ENCODE measurements at regions of chr11 and their contacts with region 1.

Region 1: DNA sequence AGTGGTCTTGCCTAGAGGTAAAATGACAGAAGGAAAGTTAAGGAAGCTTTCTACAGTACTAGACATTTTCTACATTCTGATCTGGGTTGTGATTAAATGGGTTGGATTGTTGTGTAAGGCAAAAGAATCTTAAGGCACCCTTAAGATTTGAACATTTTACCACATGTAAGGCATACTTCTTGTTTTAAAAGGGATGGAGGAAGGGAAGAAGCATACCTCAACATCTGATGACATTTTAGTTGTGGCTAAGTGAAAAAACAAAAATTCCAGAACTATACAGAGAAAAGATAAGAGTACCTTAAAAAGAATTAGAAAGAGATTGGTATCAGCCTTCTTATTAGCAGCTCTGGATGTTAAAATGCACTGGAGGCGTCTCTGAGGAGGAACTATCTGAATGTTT is 356.0 kb upstream of the CADM1 start:
- DNase-seq: no peak
- H3K4me3 ChIP-seq: no peak overlapping the region
- H3K27ac ChIP-seq: no peak overlapping the region
- H3K4me1 ChIP-seq: no peaks in the 10 kb centered on the region
- H3K27me3 ChIP-seq: no peaks in the 10 kb centered on the region
- CTCF ChIP-seq: no peak

Region 2: DNA sequence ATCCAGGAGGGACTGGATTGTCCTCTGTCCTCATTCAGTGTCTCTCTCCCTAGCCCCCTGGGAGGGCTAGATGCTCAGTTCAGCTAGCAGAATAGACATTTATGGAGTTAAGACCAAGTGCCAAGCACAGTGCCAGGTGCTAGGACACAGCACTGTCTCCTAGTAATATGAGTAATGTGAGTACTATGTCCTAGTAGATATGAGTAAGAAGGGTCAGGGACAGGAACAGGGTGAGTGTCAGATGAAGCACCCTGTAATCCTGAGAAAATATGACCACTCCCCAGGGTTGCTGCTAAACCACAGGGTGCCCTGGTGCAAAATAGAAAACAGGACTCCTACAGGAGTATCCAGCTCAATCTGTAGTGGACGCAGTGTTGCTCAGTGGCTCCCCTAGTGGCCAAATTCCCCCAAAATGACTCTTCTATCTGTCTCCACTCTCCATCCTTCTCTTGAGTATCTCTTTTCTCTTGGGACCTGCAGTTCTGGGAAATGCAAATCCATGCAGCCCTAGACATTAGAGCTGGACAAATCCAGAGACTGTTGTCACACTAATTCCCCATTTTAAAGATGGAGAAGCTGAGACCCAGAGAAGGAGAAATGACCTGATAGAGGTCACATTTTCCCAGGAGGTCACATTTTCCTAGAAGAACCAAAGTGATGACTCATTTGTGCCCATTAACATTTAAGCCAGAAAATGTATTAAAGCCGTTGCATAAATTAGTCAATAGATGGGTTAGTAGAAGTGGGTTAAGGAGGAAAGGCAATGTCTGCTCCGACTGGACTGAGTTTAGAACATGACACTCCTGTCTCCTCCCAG is 967.7 kb before region 1 on chr11:
- CTCF ChIA-PET with region 1: interaction called, 10 read pairs
- POLR2A ChIA-PET with region 1: no interaction called
- intact Hi-C with region 1: no loop called
- DNase-seq: peak; percentile 23
- H3K4me3 ChIP-seq: no peak overlapping the region
- H3K27ac ChIP-seq: no peak overlapping the region
- H3K4me1 ChIP-seq: no peaks in the 10 kb centered on the region
- H3K27me3 ChIP-seq: no peaks in the 10 kb centered on the region
- CTCF ChIP-seq: peak; percentile 70